ENCODE measurements at regions of chr5 and their contacts with region 1.

Region 1: DNA sequence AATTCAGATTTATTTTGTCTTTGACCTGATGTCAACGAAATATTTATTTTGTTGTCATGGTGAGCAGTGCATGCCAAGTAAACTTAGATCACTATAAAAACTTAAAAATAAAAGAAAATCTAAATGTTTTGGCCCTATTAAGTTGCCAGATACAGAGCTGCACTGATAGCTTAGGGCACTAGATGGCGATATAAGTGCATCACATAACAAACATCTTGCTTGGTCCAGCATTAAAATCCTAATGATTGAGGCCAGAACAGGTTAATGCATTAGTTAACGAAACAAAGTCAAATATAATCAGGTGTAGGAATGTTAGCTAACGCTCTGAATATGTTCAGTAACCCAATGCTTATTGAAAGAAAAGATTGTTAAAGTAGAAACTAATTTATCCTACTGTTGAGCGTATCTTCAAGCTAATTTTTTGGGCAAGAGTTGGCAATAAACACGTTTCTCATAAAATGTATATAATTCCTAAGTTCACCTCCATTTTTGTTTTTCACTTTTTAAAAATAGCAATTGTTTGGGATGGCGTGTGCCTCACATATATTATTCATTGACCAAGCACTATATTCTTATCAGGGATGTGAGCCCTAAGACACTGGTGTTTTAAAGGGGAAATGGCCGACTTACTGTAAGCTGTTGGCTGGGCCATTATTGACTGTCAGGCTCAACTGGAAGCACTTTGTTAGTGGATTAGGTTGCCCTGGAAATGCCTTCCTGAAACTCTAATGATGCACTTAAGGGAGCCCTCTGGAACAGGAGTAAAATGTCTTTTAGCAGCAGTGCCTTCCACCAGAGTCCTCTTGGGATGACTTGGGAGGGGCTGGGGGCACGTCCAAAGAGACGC is 33.3 kb downstream of the KCTD16 start:
- DNase-seq: no peak
- H3K4me3 ChIP-seq: no peak overlapping the region
- H3K27ac ChIP-seq: no peak overlapping the region
- H3K4me1 ChIP-seq: peaks cover 0 to 16% (median 10%) of the 10 kb centered on the region in 4 donors
- H3K27me3 ChIP-seq: peaks cover 5 to 46% (median 22%) of the 10 kb centered on the region in 3 donors
- CTCF ChIP-seq: peak; percentile 47 to 89 (median 70)
- EP300 ChIP-seq: no peak
- POLR2A ChIP-seq: no peak

Region 2: DNA sequence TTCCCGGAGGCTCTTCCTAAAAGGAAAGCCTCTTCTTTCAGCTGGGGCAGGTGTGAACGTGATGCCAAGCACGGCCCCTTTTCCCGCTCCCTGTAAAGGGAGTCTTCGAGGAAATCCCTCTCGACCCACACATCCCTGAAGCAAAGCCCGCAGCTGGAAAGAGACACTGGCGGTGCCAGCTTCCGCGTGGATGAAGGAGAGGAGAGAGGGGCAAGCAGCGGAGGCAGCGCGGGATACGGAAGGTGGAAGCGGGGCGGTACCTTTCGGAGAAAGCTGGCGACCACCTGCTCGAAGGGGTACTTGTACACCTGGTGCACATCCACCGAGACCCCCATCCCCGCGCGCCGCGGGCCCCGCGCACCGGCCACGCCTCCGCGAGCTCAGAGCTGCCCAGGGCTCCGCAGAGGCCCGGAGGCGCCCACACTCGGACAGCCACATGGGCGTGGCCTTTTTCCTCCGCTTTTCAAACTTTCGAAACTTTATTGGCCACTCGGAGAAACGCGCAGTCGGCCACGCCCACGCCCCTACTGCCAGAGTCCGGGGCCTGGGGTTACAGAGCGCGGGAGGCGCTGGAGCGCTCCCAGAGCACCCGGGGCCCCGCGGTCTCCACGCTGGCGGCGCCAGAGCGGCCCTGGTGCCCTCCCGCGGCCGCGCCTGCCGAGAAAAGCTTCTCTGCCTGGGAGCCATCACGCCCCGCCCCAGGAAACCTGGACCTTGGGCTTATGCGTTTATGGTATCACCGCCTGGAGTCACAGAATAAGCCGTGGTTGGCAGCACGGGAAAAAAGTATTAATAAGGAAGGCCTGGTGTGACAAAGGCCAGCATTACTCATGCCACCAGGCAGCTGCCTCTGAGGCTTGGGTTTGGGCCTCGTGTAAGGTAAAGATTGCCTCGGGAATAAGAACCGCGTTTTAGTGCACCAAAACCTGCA is 1631.2 kb after region 1 on chr5 and contains the start of gene PRELID2:
- intact Hi-C with region 1: loop called (anchors 5 kb)
- DNase-seq: peak; percentile 92
- H3K4me3 ChIP-seq: peak within 1 kb of the TSS; percentile 53 to 82 (median 68)
- H3K27ac ChIP-seq: peak within 1 kb of the TSS; percentile 70 to 83 (median 80)
- H3K4me1 ChIP-seq: peaks cover 0 to 30% (median 27%) of the 10 kb centered on the region in 4 donors
- H3K27me3 ChIP-seq: no peaks in the 10 kb centered on the region
- CTCF ChIP-seq: no peak
- EP300 ChIP-seq: no peak
- POLR2A ChIP-seq: peak; percentile 14 to 39
- total RNA-seq, gene PRELID2: 7.1 to 19.9 (median 12.5) TPM

Region 3: DNA sequence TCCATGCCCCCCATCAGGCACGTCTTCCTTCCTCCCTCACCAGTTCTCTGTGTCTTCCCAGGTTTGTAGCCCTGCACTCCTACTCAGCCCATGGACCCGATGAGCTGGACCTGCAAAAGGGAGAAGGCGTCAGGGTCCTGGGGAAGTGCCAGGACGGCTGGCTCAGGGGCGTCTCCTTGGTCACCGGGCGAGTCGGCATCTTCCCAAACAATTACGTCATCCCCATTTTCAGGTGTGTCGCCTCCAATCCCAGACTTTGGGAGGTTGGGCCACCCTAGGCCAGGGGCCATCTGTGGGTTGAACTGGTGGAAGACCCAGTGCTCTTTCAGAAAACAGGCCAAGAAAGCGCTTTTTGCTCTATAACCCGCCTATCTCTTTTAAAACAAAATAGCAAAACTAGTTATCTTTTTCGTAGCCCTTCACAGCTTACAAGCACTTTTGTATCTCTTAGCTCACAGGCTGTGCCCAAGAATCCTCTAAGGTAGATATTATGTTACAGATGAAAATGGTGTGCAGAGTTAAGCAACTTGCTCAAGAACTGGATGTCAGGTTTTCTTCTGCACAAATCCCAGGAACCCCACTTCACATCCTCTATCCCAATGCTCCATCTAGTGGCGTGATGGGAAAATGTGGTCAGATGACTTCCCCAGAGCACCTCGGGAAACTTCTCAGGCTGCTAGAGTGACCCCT is 1845.2 kb after region 1 on chr5:
- intact Hi-C with region 1: loop called (anchors 5 kb)
- DNase-seq: no peak
- H3K4me3 ChIP-seq: no peak overlapping the region
- H3K27ac ChIP-seq: no peak overlapping the region
- H3K4me1 ChIP-seq: no peaks in the 10 kb centered on the region
- H3K27me3 ChIP-seq: no peaks in the 10 kb centered on the region
- CTCF ChIP-seq: peak in 2 of 4 experiments; percentile 29 to 53
- EP300 ChIP-seq: no peak
- POLR2A ChIP-seq: no peak